Right cardiac atrium (tissue), 5 donors: ENCODE measurements at regions of chr19 and their contacts with region 1.

Region 1: DNA sequence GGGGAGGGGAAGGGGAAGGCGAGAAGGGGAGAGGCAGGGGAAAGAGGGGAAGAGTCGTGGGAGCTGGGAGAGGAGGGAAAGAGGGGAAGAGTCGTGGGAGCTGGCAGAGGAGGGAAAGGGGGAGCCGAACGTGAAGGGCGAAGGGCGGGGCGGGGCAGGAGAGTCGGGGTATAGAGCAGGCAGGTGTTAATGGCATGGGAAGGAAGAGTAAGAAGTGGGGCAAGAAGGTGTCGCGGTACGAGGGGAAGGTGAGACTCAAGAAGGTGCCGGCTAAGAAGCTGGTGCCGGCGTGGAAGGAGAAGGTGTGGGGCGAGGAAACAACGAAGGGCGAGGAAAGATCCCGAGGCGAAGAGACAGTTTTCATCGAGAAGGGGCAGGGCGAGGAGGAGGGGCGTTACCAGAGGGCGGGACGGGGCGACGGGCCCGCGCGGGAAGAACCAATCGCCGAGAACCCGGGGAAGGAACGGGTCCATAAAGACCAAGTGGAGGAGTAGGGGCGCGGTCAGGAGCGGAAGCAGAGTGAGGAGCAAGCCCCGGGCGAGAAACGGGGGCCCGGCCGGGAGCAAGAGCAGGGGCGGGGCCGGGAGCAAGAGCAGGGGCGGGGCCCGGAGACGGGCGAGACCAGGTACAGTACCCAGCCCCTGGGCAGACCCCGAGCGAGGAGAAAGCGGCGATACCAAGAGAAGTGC is 463 bp downstream of the CATSPERG start:
- DNase-seq: peak; percentile 96 to 98 (median 97)
- ATAC-seq: peak; percentile 95
- H3K4me3 ChIP-seq: peak overlapping the region; percentile 73
- H3K27ac ChIP-seq: peak overlapping the region; percentile 88
- H3K4me1 ChIP-seq: peaks cover 2% of the 10 kb centered on the region
- H3K27me3 ChIP-seq: no peaks in the 10 kb centered on the region

Region 2: GRCh38 chr19:37906869-37907734 is 429.0 kb before region 1 on chr19 and contains the start of gene SIPA1L3:
- intact Hi-C with region 1: loop called in 2 of 4 experiments (anchors 10 kb)
- DNase-seq: peak; percentile 95 to 98 (median 97)
- ATAC-seq: peak; percentile 99
- H3K4me3 ChIP-seq: peak within 1 kb of the TSS; percentile 88
- H3K27ac ChIP-seq: peak within 1 kb of the TSS; percentile 39
- H3K4me1 ChIP-seq: peaks cover 6% of the 10 kb centered on the region
- H3K27me3 ChIP-seq: no peaks in the 10 kb centered on the region
- total RNA-seq, gene SIPA1L3: 7.5 to 19.8 (median 12.4) TPM

Region 3: GRCh38 chr19:38134540-38135149 is 201.4 kb before region 1 on chr19:
- intact Hi-C with region 1: loop called in 1 of 4 experiments (anchors 10 kb)
- DNase-seq: no peak
- ATAC-seq: no peak
- H3K4me3 ChIP-seq: no peak overlapping the region
- H3K27ac ChIP-seq: no peak overlapping the region
- H3K4me1 ChIP-seq: no peaks in the 10 kb centered on the region
- H3K27me3 ChIP-seq: no peaks in the 10 kb centered on the region

Region 4: DNA sequence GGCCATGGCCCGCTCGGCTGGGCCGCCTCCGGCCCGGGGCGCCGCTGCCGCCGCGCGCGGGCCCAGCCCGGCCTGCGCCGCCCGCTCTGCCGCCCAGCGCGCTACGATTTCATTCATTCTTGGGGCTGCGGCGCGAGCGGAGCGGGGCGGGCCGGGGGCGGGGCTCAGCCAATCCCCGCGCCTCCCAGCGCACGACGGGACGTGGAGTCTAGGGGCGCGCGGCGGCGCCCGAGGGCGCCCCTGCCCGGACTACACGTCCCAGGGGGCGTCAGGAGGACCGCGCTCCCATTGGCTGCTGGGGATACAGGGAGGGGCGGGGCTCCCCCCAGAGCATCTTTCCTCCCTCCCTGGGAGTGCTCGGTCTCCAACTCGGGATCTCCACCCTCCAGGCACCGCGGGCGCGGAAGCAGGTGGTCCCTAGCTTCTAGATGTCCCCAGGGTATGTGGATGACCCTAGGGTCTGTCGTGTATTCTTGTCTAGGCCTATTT is 106.5 kb before region 1 on chr19:
- intact Hi-C with region 1: loop called in 1 of 4 experiments (anchors 2 kb)
- DNase-seq: peak; percentile 67 to 86 (median 81)
- ATAC-seq: peak; percentile 81 to 84
- H3K4me3 ChIP-seq: peak overlapping the region; percentile 27
- H3K27ac ChIP-seq: no peak overlapping the region
- H3K4me1 ChIP-seq: no peaks in the 10 kb centered on the region
- H3K27me3 ChIP-seq: no peaks in the 10 kb centered on the region

Region 5: DNA sequence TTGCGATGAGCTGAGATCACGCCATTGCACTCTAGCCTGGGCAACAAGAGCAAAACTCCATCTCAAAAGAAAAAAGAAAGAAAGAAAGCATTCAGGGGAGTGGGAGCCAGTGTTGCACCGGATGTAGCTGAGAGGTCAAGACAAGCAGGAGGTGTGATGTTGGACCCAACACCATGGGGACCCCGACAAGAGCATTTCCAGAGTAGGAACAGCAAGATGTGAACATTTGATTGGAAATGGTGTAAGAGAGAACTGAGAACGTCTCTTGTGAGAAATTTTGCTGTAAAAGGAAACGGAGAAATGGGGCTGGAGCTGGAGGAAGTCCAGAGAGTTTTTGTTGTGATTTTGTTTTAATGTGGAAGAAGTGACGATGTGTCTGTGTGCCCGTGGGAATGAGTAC is 96.3 kb before region 1 on chr19:
- intact Hi-C with region 1: loop called (anchors 2 to 5 kb)
- DNase-seq: no peak
- ATAC-seq: no peak
- H3K4me3 ChIP-seq: no peak overlapping the region
- H3K27ac ChIP-seq: no peak overlapping the region
- H3K4me1 ChIP-seq: no peaks in the 10 kb centered on the region
- H3K27me3 ChIP-seq: no peaks in the 10 kb centered on the region

Region 6: DNA sequence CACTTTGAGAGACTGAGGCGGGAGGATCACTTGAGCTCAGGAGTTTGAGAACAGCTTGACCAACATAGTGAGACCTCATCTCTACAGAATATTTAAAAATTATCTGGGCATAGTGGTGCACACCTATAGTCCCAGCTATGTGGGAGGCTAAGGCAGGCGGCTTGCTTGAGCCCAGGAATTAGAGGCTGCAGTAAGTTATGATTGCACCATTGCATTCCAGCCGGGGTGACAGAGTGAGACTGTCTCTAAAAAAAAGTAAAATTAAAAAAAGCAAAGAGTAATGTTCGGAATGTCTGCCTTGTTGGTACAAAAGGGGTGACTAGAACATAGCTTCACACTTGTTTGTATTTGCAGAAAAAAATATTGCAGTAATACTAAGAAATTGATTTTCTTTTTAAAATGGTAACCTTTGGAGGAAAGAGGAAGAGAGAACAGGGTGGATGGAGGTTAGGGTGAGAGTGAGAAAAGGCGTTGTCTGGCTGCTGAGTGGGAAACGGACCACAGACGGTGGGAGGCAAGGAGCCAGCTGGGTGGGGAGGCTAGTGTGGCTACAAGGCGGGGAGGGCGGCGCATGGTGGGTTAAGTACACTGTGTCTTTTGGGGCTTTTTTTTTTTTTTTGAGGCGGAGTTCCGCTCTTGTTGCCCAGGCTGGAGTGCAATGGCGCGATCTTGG is 90.1 kb before region 1 on chr19:
- intact Hi-C with region 1: loop called (anchors 2 to 5 kb)
- DNase-seq: peak in 2 of 3 donors; percentile 68 to 87
- ATAC-seq: peak; percentile 5 to 10
- H3K4me3 ChIP-seq: no peak overlapping the region
- H3K27ac ChIP-seq: no peak overlapping the region
- H3K4me1 ChIP-seq: no peaks in the 10 kb centered on the region
- H3K27me3 ChIP-seq: no peaks in the 10 kb centered on the region

Region 7: GRCh38 chr19:38374429-38375176 is 38.5 kb after region 1 on chr19 and contains the start of gene PSMD8:
- intact Hi-C with region 1: loop called in 2 of 4 experiments (anchors 5 kb)
- DNase-seq: peak; percentile 99 to 100 (median 99)
- ATAC-seq: peak; percentile 98 to 99
- H3K4me3 ChIP-seq: peak within 1 kb of the TSS; percentile 85
- H3K27ac ChIP-seq: peak within 1 kb of the TSS; percentile 95
- H3K4me1 ChIP-seq: peaks cover 5% of the 10 kb centered on the region
- H3K27me3 ChIP-seq: no peaks in the 10 kb centered on the region
- total RNA-seq, gene PSMD8: 223 to 311 (median 259) TPM